Body of pancreas (tissue), 4 donors: ENCODE measurements at regions of chr1 and their contacts with region 1.

Region 1: DNA sequence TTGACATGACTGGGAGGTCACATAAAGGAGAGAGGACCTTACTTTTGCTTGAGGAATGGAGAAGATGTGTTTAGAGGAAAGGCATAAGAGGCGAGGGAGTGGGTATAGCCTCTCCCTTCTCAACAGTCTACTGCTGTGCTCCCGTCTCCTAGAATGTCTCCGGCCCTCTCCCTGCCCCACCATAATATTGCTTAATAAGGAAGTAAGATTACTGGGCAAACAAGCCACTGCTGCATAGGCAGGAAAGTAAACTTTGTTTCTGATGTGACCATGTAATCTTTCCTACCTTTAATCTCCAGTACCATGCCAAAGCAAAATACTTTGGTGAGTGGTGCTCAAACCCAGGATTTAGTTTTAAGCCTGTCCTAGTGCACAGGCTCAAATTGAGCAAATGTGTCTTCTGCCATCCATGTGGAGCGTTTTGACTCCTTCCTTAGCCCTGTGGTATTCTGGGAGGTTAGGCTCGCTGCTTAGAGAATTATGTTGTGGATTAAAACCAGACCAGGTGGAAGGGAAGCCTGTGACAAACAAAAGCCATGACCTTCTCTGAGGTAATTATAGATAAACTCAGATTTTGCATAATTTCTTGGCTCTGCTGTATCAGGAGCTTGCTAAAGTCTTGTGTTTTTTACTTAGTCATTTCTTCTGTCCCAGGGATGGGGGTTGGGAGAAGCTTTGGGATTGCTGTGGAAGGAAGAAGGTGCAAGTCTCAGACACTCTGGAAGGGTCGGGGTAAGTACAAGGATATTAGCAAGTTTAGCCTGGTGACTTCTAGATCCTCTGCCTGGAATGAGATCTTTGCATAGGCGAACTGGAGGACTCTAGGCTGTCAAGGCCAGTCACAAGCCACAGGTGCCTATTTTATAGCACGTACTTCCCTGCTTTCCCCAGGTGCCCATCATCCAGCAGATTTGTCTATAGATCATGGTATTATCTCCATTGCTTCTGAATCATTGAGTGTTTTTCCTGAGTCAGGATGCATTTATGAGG is 34.5 kb upstream of the DIPK1A start:
- DNase-seq: peak; percentile 34 to 63 (median 50)
- ATAC-seq: peak; percentile 77
- H3K4me3 ChIP-seq: no peak overlapping the region
- H3K27ac ChIP-seq: peak overlapping the region; percentile 9 to 75 (median 67)
- H3K4me1 ChIP-seq: peaks cover 21% of the 10 kb centered on the region
- H3K27me3 ChIP-seq: no peaks in the 10 kb centered on the region
- CTCF ChIP-seq: no peak
- POLR2A ChIP-seq: no peak

Region 2: GRCh38 chr1:92843429-92844352 is 152.0 kb before region 1 on chr1:
- intact Hi-C with region 1: no loop called
- DNase-seq: no peak
- ATAC-seq: no peak
- H3K4me3 ChIP-seq: no peak overlapping the region
- H3K27ac ChIP-seq: no peak overlapping the region
- H3K4me1 ChIP-seq: peaks cover 19% of the 10 kb centered on the region
- H3K27me3 ChIP-seq: no peaks in the 10 kb centered on the region
- CTCF ChIP-seq: no peak
- POLR2A ChIP-seq: no peak

Region 3: DNA sequence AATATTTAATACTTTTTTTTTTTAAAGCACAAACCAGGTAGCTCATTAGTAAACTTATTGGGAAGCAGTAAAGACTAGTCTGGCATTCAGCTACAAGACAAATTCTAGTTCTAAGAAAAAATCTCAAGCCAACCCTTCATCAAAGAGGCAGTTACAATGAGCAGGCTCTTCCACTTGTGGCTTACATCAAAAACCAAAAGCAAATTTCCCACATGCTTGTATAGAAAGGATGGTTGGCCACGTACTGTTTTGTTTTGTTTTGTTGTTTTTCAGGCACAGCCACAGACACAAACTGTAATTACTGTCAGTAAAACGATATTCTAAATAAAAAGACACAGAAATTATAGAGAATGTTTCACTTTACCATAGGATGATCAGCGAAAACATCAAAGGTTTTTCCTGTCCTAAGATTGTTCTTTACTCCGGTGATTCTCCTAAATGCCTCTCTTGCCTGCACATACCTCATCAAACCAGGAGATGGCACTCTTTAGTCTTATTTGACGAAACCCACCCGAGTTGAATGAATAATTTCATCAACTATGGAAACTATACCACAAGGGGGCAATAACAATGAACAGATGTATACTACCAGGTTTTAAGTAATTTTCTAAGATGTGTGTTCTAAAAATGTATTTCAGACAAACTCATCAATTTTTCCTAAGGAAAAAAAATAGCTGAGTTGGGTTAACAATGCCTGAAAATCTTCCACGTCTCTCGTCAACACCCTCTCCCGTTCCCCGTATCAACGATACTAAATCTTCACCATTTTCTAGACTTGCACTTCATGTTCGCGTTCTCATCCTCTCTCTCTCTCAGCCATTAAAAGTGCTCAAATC is 137.0 kb before region 1 on chr1:
- intact Hi-C with region 1: loop called (anchors 5 kb)
- DNase-seq: peak; percentile 66 to 84 (median 71)
- ATAC-seq: peak; percentile 96
- H3K4me3 ChIP-seq: no peak overlapping the region
- H3K27ac ChIP-seq: no peak overlapping the region
- H3K4me1 ChIP-seq: no peaks in the 10 kb centered on the region
- H3K27me3 ChIP-seq: no peaks in the 10 kb centered on the region
- CTCF ChIP-seq: peak; percentile 76 to 99 (median 99)
- POLR2A ChIP-seq: no peak